ENCODE measurements at regions of chr5 and their contacts with region 1.

Region 1: DNA sequence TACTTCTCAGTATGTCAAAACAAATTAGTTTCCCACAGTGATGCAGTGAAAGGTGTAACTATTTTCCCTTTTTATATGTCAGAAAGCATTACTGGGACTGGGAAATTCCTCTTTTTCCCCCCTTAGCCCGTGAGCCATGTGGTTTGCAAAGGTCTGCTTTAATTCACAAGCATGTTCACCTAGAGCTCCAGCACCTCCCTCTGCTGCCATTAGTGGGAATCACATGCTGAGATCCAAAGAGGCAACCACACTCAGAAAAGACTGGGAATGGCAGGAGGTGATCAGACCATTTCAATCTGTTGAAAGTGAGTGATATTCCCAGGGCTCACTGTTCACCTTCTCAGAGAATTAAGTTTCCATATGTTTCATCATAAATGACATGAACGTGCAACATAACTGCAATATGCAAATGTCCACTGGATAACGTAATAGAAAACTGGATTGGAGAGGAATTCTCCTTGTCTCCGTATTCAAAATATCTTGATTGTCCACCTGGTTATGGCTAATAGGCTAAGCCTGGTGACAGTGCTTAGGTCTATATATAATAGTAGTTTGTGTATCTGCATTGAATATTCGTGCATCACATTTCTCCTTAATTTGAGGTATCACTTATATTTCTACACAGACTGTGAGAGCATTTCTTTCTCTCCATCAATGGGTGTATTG is 703.5 kb upstream of the WWC1 start:
- DNase-seq: peak; percentile 30
- H3K4me3 ChIP-seq: no peak overlapping the region
- H3K27ac ChIP-seq: no peak overlapping the region
- H3K4me1 ChIP-seq: no peaks in the 10 kb centered on the region
- H3K27me3 ChIP-seq: no peaks in the 10 kb centered on the region
- CTCF ChIP-seq: peak; percentile 48 to 67

Region 2: GRCh38 chr5:167653645-167654106 is 65.8 kb after region 1 on chr5:
- CTCF ChIA-PET with region 1: no interaction called
- dilution Hi-C with region 1: no loop called
- in situ Hi-C with region 1: no loop called
- intact Hi-C with region 1: no loop called
- DNase-seq: peak; percentile 58
- H3K4me3 ChIP-seq: no peak overlapping the region
- H3K27ac ChIP-seq: no peak overlapping the region
- H3K4me1 ChIP-seq: peaks cover 12% of the 10 kb centered on the region
- H3K27me3 ChIP-seq: no peaks in the 10 kb centered on the region
- CTCF ChIP-seq: no peak

Region 3: GRCh38 chr5:168039566-168040248 is 451.8 kb after region 1 on chr5:
- CTCF ChIA-PET with region 1: no interaction called
- dilution Hi-C with region 1: no loop called
- in situ Hi-C with region 1: loop called (anchors 10 to 25 kb)
- intact Hi-C with region 1: no loop called
- DNase-seq: no peak
- H3K4me3 ChIP-seq: no peak overlapping the region
- H3K27ac ChIP-seq: no peak overlapping the region
- H3K4me1 ChIP-seq: no peaks in the 10 kb centered on the region
- H3K27me3 ChIP-seq: no peaks in the 10 kb centered on the region
- CTCF ChIP-seq: no peak

Measured in mammary epithelial cell (primary cell).